Activated CD4-positive, alpha-beta T cell treated with anti-CD3 and anti-CD28 coated beads for 36 hours (primary cell): ENCODE measurements at regions of chr14 and their contacts with region 1.

Region 1: GRCh38 chr14:51828017-51828797 is 32.2 kb upstream of the GNG2 start:
- DNase-seq: peak; percentile 88
- ATAC-seq: peak; percentile 99
- H3K4me3 Mint-ChIP-seq: peak overlapping the region; percentile 11
- H3K27ac Mint-ChIP-seq: peak overlapping the region; percentile 62
- H3K4me1 Mint-ChIP-seq: no peaks in the 10 kb centered on the region
- H3K27me3 Mint-ChIP-seq: no peaks in the 10 kb centered on the region

Region 2: GRCh38 chr14:51860164-51860824 is 32.1 kb after region 1 on chr14 and contains the start of gene GNG2:
- CTCF ChIA-PET with region 1: interaction called, 3 read pairs
- POLR2A ChIA-PET with region 1: interaction called, 3 read pairs
- intact Hi-C with region 1: loop called (anchors 2 to 5 kb)
- DNase-seq: peak; percentile 90
- ATAC-seq: peak; percentile 93
- H3K4me3 Mint-ChIP-seq: peak within 1 kb of the TSS; percentile 90
- H3K27ac Mint-ChIP-seq: peak within 1 kb of the TSS; percentile 82
- H3K4me1 Mint-ChIP-seq: peaks cover 50% of the 10 kb centered on the region
- H3K27me3 Mint-ChIP-seq: no peaks in the 10 kb centered on the region
- total RNA-seq, gene GNG2: 133 to 136 TPM

Region 3: GRCh38 chr14:51865953-51866747 is 37.9 kb after region 1 on chr14:
- CTCF ChIA-PET with region 1: interaction called, 3 read pairs
- POLR2A ChIA-PET with region 1: interaction called, 12 read pairs
- intact Hi-C with region 1: loop called (anchors 2 to 5 kb)
- DNase-seq: no peak
- ATAC-seq: peak; percentile 51
- H3K4me3 Mint-ChIP-seq: no peak overlapping the region
- H3K27ac Mint-ChIP-seq: no peak overlapping the region
- H3K4me1 Mint-ChIP-seq: peaks cover 20% of the 10 kb centered on the region
- H3K27me3 Mint-ChIP-seq: no peaks in the 10 kb centered on the region